ENCODE measurements at regions of chr3 and their contacts with region 1.

Region 1: DNA sequence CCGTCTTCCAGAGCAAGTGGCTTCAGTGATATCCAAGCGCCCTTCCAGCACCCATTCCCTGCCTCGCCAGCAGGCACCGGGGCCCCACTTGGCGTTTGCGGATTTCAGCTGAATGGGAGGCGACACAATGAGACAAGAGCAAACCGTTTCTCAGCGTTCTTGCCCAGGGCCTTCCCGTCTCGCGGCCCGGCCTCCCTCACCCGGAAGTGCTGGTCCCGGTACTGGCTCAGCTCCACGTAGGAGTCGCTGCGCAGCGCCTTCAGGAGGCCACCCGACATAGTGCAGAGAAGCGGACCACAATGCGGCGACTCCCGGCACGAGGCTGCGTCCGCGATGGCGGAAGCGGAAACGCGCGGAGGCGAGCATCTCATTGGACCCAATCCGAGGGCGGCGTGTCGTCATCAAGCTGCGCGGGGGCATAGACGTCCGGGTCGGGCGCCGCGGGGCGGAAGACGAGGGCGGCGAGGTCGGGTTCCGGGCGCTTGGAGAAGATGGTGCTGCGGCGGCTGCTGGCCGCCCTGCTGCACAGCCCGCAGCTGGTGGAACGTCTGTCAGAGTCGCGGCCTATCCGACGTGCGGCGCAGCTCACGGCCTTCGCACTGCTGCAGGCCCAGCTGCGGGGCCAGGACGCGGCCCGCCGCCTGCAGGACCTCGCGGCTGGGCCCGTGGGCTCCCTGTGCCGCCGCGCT is at the start of gene NCBP2:
- DNase-seq: peak; percentile 98 to 100 (median 99)
- ATAC-seq: peak; percentile 92
- H3K4me3 ChIP-seq: peak within 1 kb of the TSS; percentile 89
- H3K4me3 Mint-ChIP-seq: peak within 1 kb of the TSS; percentile 99
- H3K27ac ChIP-seq: peak within 1 kb of the TSS; percentile 94 to 97
- H3K27ac Mint-ChIP-seq: peak within 1 kb of the TSS; percentile 96
- H3K4me1 ChIP-seq: peaks cover 24% of the 10 kb centered on the region
- H3K4me1 Mint-ChIP-seq: peaks cover 51% of the 10 kb centered on the region
- H3K27me3 ChIP-seq: no peaks in the 10 kb centered on the region
- H3K27me3 Mint-ChIP-seq: no peaks in the 10 kb centered on the region
- CTCF ChIP-seq: peak; percentile 59
- total RNA-seq, gene NCBP2: 41.4 to 44.6 TPM

Region 2: DNA sequence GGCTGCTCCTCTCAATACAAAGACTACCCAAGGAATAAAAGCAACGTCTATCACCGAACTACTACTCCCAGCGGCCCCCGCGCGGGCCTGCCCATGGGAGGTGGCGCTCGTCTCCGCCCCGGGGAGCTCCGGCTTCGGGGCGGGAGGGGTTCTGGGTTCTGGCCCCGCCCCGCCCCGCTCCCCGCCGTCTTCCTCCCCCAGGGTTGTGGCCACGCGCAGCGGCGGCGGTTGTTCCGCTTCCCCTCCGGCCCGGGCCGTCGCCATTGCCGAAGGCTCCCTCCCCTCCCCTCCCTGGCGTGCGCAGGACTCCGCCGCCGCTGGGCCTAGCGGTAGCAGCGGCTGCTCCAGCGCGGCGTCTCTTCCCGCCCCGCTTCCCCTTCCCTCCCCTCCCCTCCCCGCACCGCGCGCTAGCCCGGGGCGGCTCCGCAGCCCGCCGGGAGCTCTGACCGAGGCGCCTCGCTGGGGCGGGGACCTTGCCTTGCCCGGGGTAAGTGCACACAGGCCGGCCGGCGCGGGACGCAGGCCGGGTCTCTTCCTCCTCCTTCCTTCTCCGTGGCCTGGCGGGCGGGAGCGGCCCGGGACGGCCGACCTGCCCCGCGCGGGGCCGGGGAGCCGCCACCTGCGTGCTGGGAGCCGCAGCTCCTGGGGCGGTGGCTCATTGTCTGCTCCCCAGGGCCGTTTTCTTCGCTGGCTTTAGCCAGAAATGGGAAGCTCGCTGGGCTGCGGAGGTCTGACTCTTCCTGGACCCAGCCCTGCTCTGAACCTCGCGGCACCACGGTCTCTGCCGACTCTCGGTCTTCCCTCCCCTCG is 202.5 kb before region 1 on chr3 and contains the start of gene PAK2:
- CTCF ChIA-PET with region 1: interaction called, 8 read pairs
- POLR2A ChIA-PET with region 1: interaction called, 25 read pairs
- intact Hi-C with region 1: loop called in 1 of 2 experiments (anchors 1 kb)
- DNase-seq: peak; percentile 80 to 96 (median 92)
- ATAC-seq: peak; percentile 80
- H3K4me3 ChIP-seq: peak within 1 kb of the TSS; percentile 96
- H3K4me3 Mint-ChIP-seq: peak within 1 kb of the TSS; percentile 98
- H3K27ac ChIP-seq: peak within 1 kb of the TSS; percentile 86 to 95
- H3K27ac Mint-ChIP-seq: peak within 1 kb of the TSS; percentile 95
- H3K4me1 ChIP-seq: peaks cover 21% of the 10 kb centered on the region
- H3K4me1 Mint-ChIP-seq: peaks cover 35% of the 10 kb centered on the region
- H3K27me3 ChIP-seq: no peaks in the 10 kb centered on the region
- H3K27me3 Mint-ChIP-seq: no peaks in the 10 kb centered on the region
- CTCF ChIP-seq: no peak
- total RNA-seq, gene PAK2: 36.2 to 41.7 TPM

Region 3: GRCh38 chr3:196867507-196868296 is 74.7 kb before region 1 on chr3 and contains the start of gene SENP5:
- CTCF ChIA-PET with region 1: interaction called, 34 read pairs
- POLR2A ChIA-PET with region 1: interaction called, 113 read pairs
- intact Hi-C with region 1: loop called (anchors 1 kb)
- DNase-seq: peak; percentile 75 to 96 (median 86)
- ATAC-seq: peak; percentile 96
- H3K4me3 ChIP-seq: peak within 1 kb of the TSS; percentile 94
- H3K4me3 Mint-ChIP-seq: peak within 1 kb of the TSS; percentile 98
- H3K27ac ChIP-seq: peak within 1 kb of the TSS; percentile 85 to 94
- H3K27ac Mint-ChIP-seq: peak within 1 kb of the TSS; percentile 93
- H3K4me1 ChIP-seq: peaks cover 31% of the 10 kb centered on the region
- H3K4me1 Mint-ChIP-seq: peaks cover 38% of the 10 kb centered on the region
- H3K27me3 ChIP-seq: no peaks in the 10 kb centered on the region
- H3K27me3 Mint-ChIP-seq: no peaks in the 10 kb centered on the region
- CTCF ChIP-seq: no peak
- total RNA-seq, gene SENP5: 62.7 to 64.7 TPM

Region 4: DNA sequence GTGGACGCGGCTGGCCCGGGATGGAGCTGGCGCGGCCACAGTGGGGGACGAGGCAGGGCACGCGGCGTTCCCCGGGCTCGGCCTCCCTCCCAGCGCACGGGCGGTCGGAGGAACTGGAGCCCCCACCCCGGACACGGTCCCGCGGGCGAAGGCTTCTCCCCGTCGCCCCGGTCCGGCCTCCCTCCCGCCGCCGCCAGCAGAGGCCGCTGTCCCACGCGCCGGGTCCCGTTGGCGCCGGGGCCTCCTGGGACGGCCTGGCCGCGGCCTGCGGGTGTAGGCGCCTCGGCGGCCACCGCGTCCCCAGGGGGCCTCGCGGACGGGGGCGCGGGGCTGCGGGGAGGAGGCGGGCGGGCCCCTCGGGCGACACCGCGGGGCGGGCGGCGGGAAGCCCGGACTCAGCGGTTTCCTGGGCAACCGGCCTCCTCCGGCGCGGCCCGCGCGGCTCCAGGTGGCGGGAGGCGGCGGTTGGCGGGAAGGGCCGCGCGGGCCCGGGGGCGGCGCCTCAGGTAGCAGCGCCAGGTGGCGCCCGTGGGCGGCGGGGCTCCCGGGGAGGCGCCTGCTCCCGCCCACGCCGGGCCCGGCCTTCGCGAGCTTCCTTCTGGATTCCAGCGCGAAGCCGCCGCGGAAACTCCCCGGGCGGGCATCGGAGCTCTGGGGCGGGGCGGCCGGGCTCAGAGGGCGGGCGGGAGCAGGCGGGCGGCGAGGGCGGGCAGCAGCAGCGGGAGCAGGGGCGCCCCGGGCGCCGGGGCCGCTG is 60.5 kb after region 1 on chr3:
- CTCF ChIA-PET with region 1: interaction called, 4 read pairs
- POLR2A ChIA-PET with region 1: no interaction called
- intact Hi-C with region 1: loop called in 1 of 2 experiments (anchors 2 kb)
- DNase-seq: peak; percentile 49 to 94 (median 72)
- ATAC-seq: peak; percentile 84
- H3K4me3 ChIP-seq: peak overlapping the region; percentile 61
- H3K4me3 Mint-ChIP-seq: no peak overlapping the region
- H3K27ac ChIP-seq: no peak overlapping the region
- H3K27ac Mint-ChIP-seq: no peak overlapping the region
- H3K4me1 ChIP-seq: peaks cover 16% of the 10 kb centered on the region
- H3K4me1 Mint-ChIP-seq: peaks cover 8% of the 10 kb centered on the region
- H3K27me3 ChIP-seq: no peaks in the 10 kb centered on the region
- H3K27me3 Mint-ChIP-seq: no peaks in the 10 kb centered on the region
- CTCF ChIP-seq: peak; percentile 62

Region 5: DNA sequence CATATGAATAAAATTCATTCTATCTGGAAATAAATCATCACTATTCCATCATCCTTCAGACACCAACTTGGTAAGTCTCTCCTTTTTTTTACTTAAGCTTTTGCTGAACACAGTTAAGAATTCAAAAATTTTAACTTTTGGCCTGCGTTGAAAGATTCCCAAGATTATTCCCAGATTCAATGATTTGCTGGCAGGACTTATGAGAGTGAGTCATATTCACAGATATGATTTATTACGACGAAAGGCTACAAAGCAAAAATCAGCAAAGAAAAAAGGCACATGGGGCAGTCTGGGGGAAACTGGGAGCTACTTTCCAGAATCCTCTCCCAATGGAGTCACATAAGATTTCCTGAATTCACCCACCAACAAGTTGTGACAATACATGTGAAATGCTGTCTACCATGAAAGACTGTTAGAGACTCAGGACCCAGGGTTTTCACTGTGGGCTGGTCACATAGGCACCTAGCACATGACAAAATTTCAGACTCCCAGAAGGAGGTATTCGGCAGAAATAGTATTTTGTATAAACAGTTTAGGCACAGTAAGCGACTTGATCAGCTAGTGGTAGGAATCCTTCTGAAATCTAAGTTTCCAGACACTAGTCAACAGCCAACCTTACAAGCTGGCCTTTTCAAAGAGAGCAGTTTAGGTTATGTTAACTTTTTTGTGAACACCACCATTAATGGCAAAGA is 273.9 kb after region 1 on chr3:
- CTCF ChIA-PET with region 1: no interaction called
- POLR2A ChIA-PET with region 1: no interaction called
- intact Hi-C with region 1: no loop called
- DNase-seq: no peak
- ATAC-seq: no peak
- H3K4me3 ChIP-seq: no peak overlapping the region
- H3K4me3 Mint-ChIP-seq: no peak overlapping the region
- H3K27ac ChIP-seq: no peak overlapping the region
- H3K27ac Mint-ChIP-seq: no peak overlapping the region
- H3K4me1 ChIP-seq: no peaks in the 10 kb centered on the region
- H3K4me1 Mint-ChIP-seq: peaks cover 72% of the 10 kb centered on the region
- H3K27me3 ChIP-seq: no peaks in the 10 kb centered on the region
- H3K27me3 Mint-ChIP-seq: no peaks in the 10 kb centered on the region
- CTCF ChIP-seq: no peak

Region 6: GRCh38 chr3:197554562-197555280 is 612.4 kb after region 1 on chr3:
- CTCF ChIA-PET with region 1: no interaction called
- POLR2A ChIA-PET with region 1: no interaction called
- intact Hi-C with region 1: loop called in 1 of 2 experiments (anchors 10 kb)
- DNase-seq: peak; percentile 79 to 95 (median 90)
- ATAC-seq: peak; percentile 93
- H3K4me3 ChIP-seq: peak overlapping the region; percentile 95
- H3K4me3 Mint-ChIP-seq: peak overlapping the region; percentile 96
- H3K27ac ChIP-seq: peak overlapping the region; percentile 81
- H3K27ac Mint-ChIP-seq: peak overlapping the region; percentile 84
- H3K4me1 ChIP-seq: peaks cover 21% of the 10 kb centered on the region
- H3K4me1 Mint-ChIP-seq: peaks cover 31% of the 10 kb centered on the region
- H3K27me3 ChIP-seq: peaks cover 0 to 8% of the 10 kb centered on the region in 2 experiments
- H3K27me3 Mint-ChIP-seq: peaks cover 15% of the 10 kb centered on the region
- CTCF ChIP-seq: peak; percentile 64